ENCODE measurements at regions of chr10 and their contacts with region 1.

Region 1: GRCh38 chr10:5094265-5095205 is at the start of gene AKR1C3:
- DNase-seq: no peak
- ATAC-seq: peak; percentile 84
- H3K4me3 ChIP-seq: peak within 1 kb of the TSS; percentile 96 to 98
- H3K27ac ChIP-seq: peak within 1 kb of the TSS; percentile 84 to 87
- H3K4me1 ChIP-seq: no peaks in the 10 kb centered on the region
- H3K27me3 ChIP-seq: no peaks in the 10 kb centered on the region
- total RNA-seq, gene AKR1C3: 36.2 to 98.8 TPM

Region 2: GRCh38 chr10:5014936-5015335 is 79.6 kb before region 1 on chr10:
- intact Hi-C with region 1: loop called (anchors 5 kb)
- DNase-seq: no peak
- ATAC-seq: no peak
- H3K4me3 ChIP-seq: no peak overlapping the region
- H3K27ac ChIP-seq: no peak overlapping the region
- H3K4me1 ChIP-seq: peaks cover 0 to 3% of the 10 kb centered on the region in 2 donors
- H3K27me3 ChIP-seq: no peaks in the 10 kb centered on the region

Region 3: GRCh38 chr10:5023177-5023805 is 71.2 kb before region 1 on chr10:
- intact Hi-C with region 1: loop called (anchors 5 kb)
- DNase-seq: no peak
- ATAC-seq: no peak
- H3K4me3 ChIP-seq: no peak overlapping the region
- H3K27ac ChIP-seq: no peak overlapping the region
- H3K4me1 ChIP-seq: peaks cover 0 to 9% of the 10 kb centered on the region in 2 donors
- H3K27me3 ChIP-seq: no peaks in the 10 kb centered on the region

Region 4: DNA sequence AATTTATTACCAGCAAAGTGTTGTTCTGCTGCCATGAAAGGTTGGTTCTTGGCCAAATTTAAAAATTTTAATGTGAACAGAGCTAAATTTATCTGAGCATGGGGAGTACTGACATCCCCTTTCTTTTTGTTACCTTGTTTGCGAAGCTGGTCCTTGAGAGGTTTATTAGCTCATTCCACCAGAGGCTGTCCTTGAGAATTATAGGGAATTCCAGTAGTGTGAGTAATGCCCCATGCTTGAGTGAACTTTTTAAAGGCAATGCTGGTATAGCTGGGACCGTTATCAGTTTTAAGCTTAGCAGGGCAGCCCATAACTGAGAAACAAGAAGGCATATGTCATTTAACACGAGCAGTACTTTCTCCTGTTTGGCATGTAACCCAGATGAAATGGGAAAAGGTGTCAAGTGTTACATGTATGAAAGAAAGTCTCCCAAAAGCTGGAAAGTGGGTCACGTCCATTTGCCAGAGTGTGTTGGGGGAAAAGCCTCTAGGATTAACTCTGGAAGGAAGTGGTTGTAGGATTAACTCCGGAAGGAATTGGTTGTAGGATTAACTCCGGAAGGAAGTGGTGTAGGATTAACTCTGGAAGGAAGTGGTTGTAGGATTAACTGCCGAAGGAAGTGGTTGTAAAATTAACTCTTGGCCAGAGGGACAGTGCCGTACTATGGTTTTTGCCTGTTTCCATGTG is 53.6 kb before region 1 on chr10:
- intact Hi-C with region 1: loop called in 1 of 2 experiments (anchors 1 kb)
- DNase-seq: no peak
- ATAC-seq: no peak
- H3K4me3 ChIP-seq: peak overlapping the region in 1 of 2 donors; percentile 39
- H3K27ac ChIP-seq: peak overlapping the region; percentile 36 to 80
- H3K4me1 ChIP-seq: peaks cover 0 to 5% of the 10 kb centered on the region in 2 donors
- H3K27me3 ChIP-seq: no peaks in the 10 kb centered on the region

Region 5: GRCh38 chr10:5216801-5217200 is 122.3 kb after region 1 on chr10:
- intact Hi-C with region 1: no loop called
- DNase-seq: no peak
- ATAC-seq: no peak
- H3K4me3 ChIP-seq: no peak overlapping the region
- H3K27ac ChIP-seq: no peak overlapping the region
- H3K4me1 ChIP-seq: no peaks in the 10 kb centered on the region
- H3K27me3 ChIP-seq: no peaks in the 10 kb centered on the region

Measured in aorta (tissue), 5 donors.